Activated CD4-positive, alpha-beta T cell treated with anti-CD3 and anti-CD28 coated beads for 36 hours (primary cell): ENCODE measurements at regions of chr4 and their contacts with region 1.

Region 1: GRCh38 chr4:168076989-168077725 is 15.2 kb upstream of the ANXA10 start:
- DNase-seq: peak; percentile 71
- ATAC-seq: peak; percentile 61
- H3K4me3 Mint-ChIP-seq: no peak overlapping the region
- H3K27ac Mint-ChIP-seq: no peak overlapping the region
- H3K4me1 Mint-ChIP-seq: no peaks in the 10 kb centered on the region
- H3K27me3 Mint-ChIP-seq: peaks cover 4% of the 10 kb centered on the region

Region 2: GRCh38 chr4:166324321-166324720 is 1752.8 kb before region 1 on chr4:
- CTCF ChIA-PET with region 1: no interaction called
- POLR2A ChIA-PET with region 1: no interaction called
- intact Hi-C with region 1: loop called in 1 of 2 experiments (anchors 10 kb)
- DNase-seq: peak; percentile 9
- ATAC-seq: no peak
- H3K4me3 Mint-ChIP-seq: no peak overlapping the region
- H3K27ac Mint-ChIP-seq: no peak overlapping the region
- H3K4me1 Mint-ChIP-seq: no peaks in the 10 kb centered on the region
- H3K27me3 Mint-ChIP-seq: no peaks in the 10 kb centered on the region

Region 3: GRCh38 chr4:167622481-167623246 is 454.5 kb before region 1 on chr4:
- CTCF ChIA-PET with region 1: no interaction called
- POLR2A ChIA-PET with region 1: no interaction called
- intact Hi-C with region 1: loop called (anchors 5 to 10 kb)
- DNase-seq: peak; percentile 63
- ATAC-seq: peak; percentile 68
- H3K4me3 Mint-ChIP-seq: no peak overlapping the region
- H3K27ac Mint-ChIP-seq: no peak overlapping the region
- H3K4me1 Mint-ChIP-seq: no peaks in the 10 kb centered on the region
- H3K27me3 Mint-ChIP-seq: no peaks in the 10 kb centered on the region

Region 4: DNA sequence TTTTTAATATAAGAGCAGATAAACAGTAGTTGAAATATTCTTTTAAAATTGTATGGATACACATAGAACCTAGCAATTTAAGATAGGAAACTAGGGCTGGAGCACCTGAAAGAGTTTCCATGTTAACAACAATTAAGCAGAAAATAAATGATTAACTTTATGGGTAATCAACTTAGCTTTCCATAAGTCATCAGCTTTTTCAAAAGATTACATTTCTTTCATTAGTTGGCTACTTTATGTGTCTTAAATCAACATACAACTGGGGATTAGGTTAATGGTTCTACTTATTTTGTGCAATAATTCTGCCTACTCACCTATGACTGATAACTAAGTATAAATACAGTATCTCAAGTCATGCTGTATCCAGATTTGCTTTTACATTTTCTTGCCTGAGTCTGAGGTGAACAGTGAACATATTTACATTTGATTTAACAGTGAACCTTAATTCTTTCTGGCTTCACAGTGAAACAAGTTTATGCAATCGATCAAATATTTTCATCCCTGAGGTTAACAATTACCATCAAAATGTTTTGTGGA is 15.1 kb after region 1 on chr4 and contains the start of gene ANXA10:
- CTCF ChIA-PET with region 1: no interaction called
- POLR2A ChIA-PET with region 1: no interaction called
- intact Hi-C with region 1: no loop called
- DNase-seq: no peak
- ATAC-seq: no peak
- H3K4me3 Mint-ChIP-seq: no peak within 1 kb of the TSS
- H3K27ac Mint-ChIP-seq: no peak within 1 kb of the TSS
- H3K4me1 Mint-ChIP-seq: no peaks in the 10 kb centered on the region
- H3K27me3 Mint-ChIP-seq: no peaks in the 10 kb centered on the region
- total RNA-seq, gene ANXA10: not detected

Region 5: GRCh38 chr4:168183717-168184608 is 106.8 kb after region 1 on chr4:
- CTCF ChIA-PET with region 1: no interaction called
- POLR2A ChIA-PET with region 1: no interaction called
- intact Hi-C with region 1: no loop called
- DNase-seq: no peak
- ATAC-seq: no peak
- H3K4me3 Mint-ChIP-seq: no peak overlapping the region
- H3K27ac Mint-ChIP-seq: no peak overlapping the region
- H3K4me1 Mint-ChIP-seq: peaks cover 4% of the 10 kb centered on the region
- H3K27me3 Mint-ChIP-seq: no peaks in the 10 kb centered on the region